Activated CD8-positive, alpha-beta T cell treated with anti-CD3 and anti-CD28 coated beads for 36 hours (primary cell): ENCODE measurements at regions of chr16 and their contacts with region 1.

Region 1: GRCh38 chr16:2205104-2205966 is at the start of gene MLST8:
- DNase-seq: peak; percentile 85
- ATAC-seq: peak; percentile 92
- H3K4me3 Mint-ChIP-seq: peak within 1 kb of the TSS; percentile 88
- H3K27ac Mint-ChIP-seq: peak within 1 kb of the TSS; percentile 87
- H3K4me1 Mint-ChIP-seq: peaks cover 17% of the 10 kb centered on the region
- H3K27me3 Mint-ChIP-seq: no peaks in the 10 kb centered on the region
- CTCF ChIP-seq: peak; percentile 32
- total RNA-seq, gene MLST8: 70.0 to 70.7 TPM

Region 2: GRCh38 chr16:2194852-2195321 is 10.4 kb before region 1 on chr16:
- CTCF ChIA-PET with region 1: interaction called, 11 read pairs
- POLR2A ChIA-PET with region 1: interaction called, 8 read pairs
- intact Hi-C with region 1: no loop called
- DNase-seq: peak; percentile 75
- ATAC-seq: peak; percentile 77
- H3K4me3 Mint-ChIP-seq: peak overlapping the region; percentile 55
- H3K27ac Mint-ChIP-seq: no peak overlapping the region
- H3K4me1 Mint-ChIP-seq: peaks cover 3% of the 10 kb centered on the region
- H3K27me3 Mint-ChIP-seq: peaks cover 23% of the 10 kb centered on the region
- CTCF ChIP-seq: peak; percentile 63